Esophagus squamous epithelium (tissue), 5 donors: ENCODE measurements at regions of chr2 and their contacts with region 1.

Region 1: DNA sequence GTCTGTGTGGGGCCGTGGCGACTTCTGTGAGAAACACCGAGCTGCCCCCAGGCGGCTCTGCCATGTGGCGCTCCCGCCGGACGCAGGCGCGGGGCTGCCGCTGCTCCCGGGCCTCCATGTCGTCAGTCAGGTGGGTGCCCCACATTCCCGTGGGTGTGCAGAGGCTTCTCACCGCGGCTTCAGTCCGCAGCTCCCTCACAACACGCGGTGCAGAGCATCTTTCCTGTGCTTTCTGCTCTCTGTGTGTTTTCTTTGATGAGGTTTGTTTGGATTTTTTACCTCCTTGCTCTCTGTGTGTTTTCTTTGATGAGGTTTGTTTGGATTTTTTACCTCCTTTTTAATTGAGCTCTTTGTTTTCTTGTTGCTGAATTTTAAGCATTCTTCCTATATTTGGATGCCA is 13.0 kb downstream of the AQP12A start:
- DNase-seq: no peak
- H3K4me3 ChIP-seq: no peak overlapping the region
- H3K27ac ChIP-seq: no peak overlapping the region
- H3K4me1 ChIP-seq: no peaks in the 10 kb centered on the region
- H3K27me3 ChIP-seq: peaks cover 0 to 85% (median 0%) of the 10 kb centered on the region in 4 donors
- CTCF ChIP-seq: no peak
- POLR2A ChIP-seq: no peak

Region 2: DNA sequence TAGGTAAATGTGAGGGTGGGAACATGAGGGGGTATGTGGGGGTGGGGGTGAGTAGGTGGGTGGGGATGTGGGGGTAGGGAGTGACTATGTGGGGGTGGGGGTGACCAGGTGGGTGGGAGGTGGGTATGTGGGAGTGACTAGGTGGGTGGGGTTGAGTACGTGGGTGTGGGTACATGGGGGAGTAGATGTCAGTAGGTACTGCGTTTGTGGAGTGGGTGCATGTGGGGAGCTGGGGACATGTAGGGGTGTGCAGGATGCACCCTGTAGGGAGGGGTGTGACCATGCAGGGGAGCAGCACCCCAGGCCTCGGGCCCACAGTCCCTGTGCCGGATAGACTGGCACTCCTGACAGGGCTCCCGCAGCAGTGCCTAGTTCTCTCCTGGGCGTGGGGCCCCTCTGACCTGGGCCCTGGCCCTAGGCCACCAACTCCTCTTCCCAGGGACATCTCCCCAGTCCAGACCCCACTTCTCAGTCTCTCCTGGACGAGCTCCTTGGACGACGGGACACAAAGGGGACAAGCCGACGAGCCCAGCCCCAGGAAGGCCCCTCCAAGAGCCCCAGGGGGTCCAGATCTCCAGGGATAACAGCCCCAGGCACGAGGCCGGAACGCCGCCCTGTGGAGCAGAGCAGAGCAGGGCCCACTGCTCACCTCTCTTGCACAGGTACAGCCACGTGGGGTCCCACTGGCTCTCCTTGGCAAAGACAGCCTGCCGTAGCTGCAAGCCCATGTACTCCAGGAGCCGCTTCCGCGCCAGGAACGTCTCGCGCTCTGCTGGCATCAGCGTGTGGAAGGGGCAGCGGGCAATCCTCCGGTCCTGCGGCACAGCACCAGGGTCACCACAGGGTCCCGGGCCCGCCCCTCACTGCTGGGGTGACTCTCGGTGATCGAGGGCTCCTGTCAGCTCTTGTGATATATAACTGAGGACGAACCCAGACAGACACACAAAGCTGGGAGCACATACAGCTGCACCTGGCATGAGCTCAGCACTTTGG is 205.0 kb before region 1 on chr2:
- intact Hi-C with region 1: loop called (anchors 10 kb)
- DNase-seq: no peak
- H3K4me3 ChIP-seq: no peak overlapping the region
- H3K27ac ChIP-seq: no peak overlapping the region
- H3K4me1 ChIP-seq: no peaks in the 10 kb centered on the region
- H3K27me3 ChIP-seq: no peaks in the 10 kb centered on the region
- CTCF ChIP-seq: no peak
- POLR2A ChIP-seq: no peak